ENCODE measurements at regions of chrX and their contacts with region 1.

Region 1: GRCh38 chrX:130909469-130910136 is 6.6 kb upstream of the ENOX2 start:
- DNase-seq: no peak
- ATAC-seq: no peak
- H3K4me3 ChIP-seq: no peak overlapping the region
- H3K27ac ChIP-seq: peak overlapping the region in 1 of 12 donors; percentile 39
- H3K4me1 ChIP-seq: no peaks in the 10 kb centered on the region
- H3K27me3 ChIP-seq: peaks cover 0 to 11% (median 0%) of the 10 kb centered on the region in 9 donors
- CTCF ChIP-seq: no peak
- POLR2A ChIP-seq: no peak

Region 2: GRCh38 chrX:130401415-130402207 is 508.0 kb before region 1 on chrX and contains the start of gene RBMX2:
- intact Hi-C with region 1: loop called in 2 of 10 experiments (anchors 5 to 10 kb)
- DNase-seq: peak; percentile 71 to 84 (median 77)
- ATAC-seq: peak; percentile 92 to 100 (median 96)
- H3K4me3 ChIP-seq: peak within 1 kb of the TSS; percentile 46 to 94 (median 70)
- H3K27ac ChIP-seq: peak within 1 kb of the TSS; percentile 32 to 79 (median 70)
- H3K4me1 ChIP-seq: peaks cover 0 to 14% (median 0%) of the 10 kb centered on the region in 12 donors
- H3K27me3 ChIP-seq: peaks cover 0 to 8% (median 0%) of the 10 kb centered on the region in 9 donors
- CTCF ChIP-seq: no peak
- POLR2A ChIP-seq: peak in 1 of 2 donors; percentile 76
- total RNA-seq, gene RBMX2: 7.4 to 11.6 (median 10.6) TPM